ENCODE measurements at regions of chr14 and their contacts with region 1.

Region 1: GRCh38 chr14:104350463-104351185 is 212.2 kb downstream of the KIF26A start:
- DNase-seq: peak; percentile 25 to 96 (median 86)
- H3K4me3 ChIP-seq: peak overlapping the region in 2 of 59 donors; percentile 14 to 28
- H3K27ac ChIP-seq: peak overlapping the region in 45 of 59 donors; percentile 1 to 86 (median 61)
- H3K27me3 ChIP-seq: peaks cover 0 to 20% (median 4%) of the 10 kb centered on the region in 45 donors
- CTCF ChIP-seq: peak in 24 of 56 donors; percentile 9 to 56 (median 28)

Region 2: DNA sequence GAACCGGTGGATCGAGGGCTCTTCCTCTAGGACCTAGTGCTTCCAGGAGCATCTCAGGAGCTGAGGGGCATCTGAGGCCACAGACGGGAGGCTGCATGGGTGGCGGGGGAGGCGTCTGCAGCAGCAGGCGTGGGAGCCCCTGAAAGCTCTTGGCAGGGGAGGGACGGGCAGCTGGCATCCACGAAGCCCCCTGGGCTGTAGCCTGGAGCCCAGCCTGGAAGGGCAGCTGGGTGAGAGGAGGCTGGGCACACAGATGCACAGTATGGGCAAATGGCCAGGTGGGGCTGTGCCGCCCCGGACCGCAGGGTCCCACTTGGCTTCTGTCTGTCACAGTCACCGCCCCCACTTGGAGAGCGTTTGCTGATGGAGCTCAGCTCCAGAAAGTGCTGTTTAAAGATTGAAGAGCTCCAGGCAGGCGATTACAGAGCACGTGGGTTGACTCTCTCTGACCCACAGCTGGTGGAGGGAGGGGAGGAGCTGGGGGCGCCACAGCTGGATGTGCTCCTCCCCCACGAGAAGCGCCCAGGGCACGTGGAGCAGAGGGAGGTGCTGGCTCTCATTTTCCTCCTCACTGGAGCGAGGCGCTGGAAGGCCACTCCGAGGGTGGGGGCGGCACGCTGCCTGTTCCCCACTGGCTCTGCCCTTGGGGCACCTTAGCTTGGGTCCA is 73.9 kb after region 1 on chr14:
- intact Hi-C with region 1: loop called in 1 of 2 experiments (anchors 2 kb)
- DNase-seq: peak in 7 of 10 donors; percentile 43 to 65 (median 54)
- H3K4me3 ChIP-seq: peak overlapping the region in 7 of 59 donors; percentile 11 to 42 (median 20)
- H3K27ac ChIP-seq: peak overlapping the region in 9 of 59 donors; percentile 9 to 64 (median 26)
- H3K27me3 ChIP-seq: peaks cover 0 to 6% (median 0%) of the 10 kb centered on the region in 45 donors
- CTCF ChIP-seq: no peak